GM23248 (cell line): ENCODE measurements at regions of chr11 and their contacts with region 1.

Region 1: GRCh38 chr11:60363542-60364510 is 14.5 kb upstream of the MS4A7 start:
- DNase-seq: peak; percentile 62
- H3K4me3 ChIP-seq: no peak overlapping the region
- H3K27ac ChIP-seq: no peak overlapping the region
- H3K4me1 ChIP-seq: no peaks in the 10 kb centered on the region
- H3K27me3 ChIP-seq: no peaks in the 10 kb centered on the region

Region 2: DNA sequence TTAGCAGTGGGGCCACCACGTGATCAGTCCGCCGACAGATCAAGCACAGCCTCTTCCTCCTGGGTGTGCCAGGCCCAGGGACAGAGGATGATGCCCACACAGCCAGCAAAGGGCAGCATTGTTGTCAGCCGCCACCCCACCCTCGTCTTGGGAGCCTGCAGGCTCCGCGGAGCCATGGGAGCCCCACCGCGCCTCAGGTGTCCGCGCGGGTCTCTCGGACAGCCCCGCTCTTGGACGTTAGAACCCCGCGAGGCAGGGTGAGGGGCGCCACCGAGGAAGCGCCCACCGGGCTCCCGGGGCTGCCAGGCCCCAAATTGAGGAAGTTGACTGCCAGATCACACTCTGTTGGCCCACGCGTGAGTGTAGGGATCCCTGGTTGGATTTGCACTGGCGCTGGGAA is 251.7 kb after region 1 on chr11:
- in situ Hi-C with region 1: loop called (anchors 10 kb)
- DNase-seq: no peak
- H3K4me3 ChIP-seq: no peak overlapping the region
- H3K27ac ChIP-seq: no peak overlapping the region
- H3K4me1 ChIP-seq: no peaks in the 10 kb centered on the region
- H3K27me3 ChIP-seq: no peaks in the 10 kb centered on the region